Activated T-helper 1 cell treated with anti-CD3 and anti-CD28 coated beads, Interleukin-12 subunit alpha, Interleukin-12 subunit beta, Interleukin-2, Interleukin-4 antibody, amounts not matched to agents 30 ng/mL and 10 ng/mL and 1 ng/mL, durations not matched to agents 14 hours and 24 hours and 36 hours (primary cell): ENCODE measurements at regions of chr13 and their contacts with region 1.

Region 1: GRCh38 chr13:23375001-23375971 is 58.2 kb downstream of the SACS start:
- DNase-seq: peak; percentile 92
- H3K4me3 Mint-ChIP-seq: peak overlapping the region; percentile 78
- H3K27ac Mint-ChIP-seq: peak overlapping the region; percentile 36
- H3K4me1 Mint-ChIP-seq: peaks cover 74% of the 10 kb centered on the region
- H3K27me3 Mint-ChIP-seq: peaks cover 4% of the 10 kb centered on the region

Region 2: GRCh38 chr13:21670883-21671619 is 1704.2 kb before region 1 on chr13 and contains the start of gene FGF9:
- intact Hi-C with region 1: loop called (anchors 2 kb)
- DNase-seq: peak; percentile 77
- H3K4me3 Mint-ChIP-seq: peak within 1 kb of the TSS; percentile 82
- H3K27ac Mint-ChIP-seq: peak within 1 kb of the TSS; percentile 59
- H3K4me1 Mint-ChIP-seq: peaks cover 42% of the 10 kb centered on the region
- H3K27me3 Mint-ChIP-seq: peaks cover 62% of the 10 kb centered on the region
- total RNA-seq, gene FGF9: 0.23 and 0.47 TPM in 2 replicates

Region 3: GRCh38 chr13:23466144-23467002 is 91.1 kb after region 1 on chr13:
- intact Hi-C with region 1: loop called (anchors 2 kb)
- DNase-seq: peak; percentile 40
- H3K4me3 Mint-ChIP-seq: peak overlapping the region; percentile 68
- H3K27ac Mint-ChIP-seq: peak overlapping the region; percentile 21
- H3K4me1 Mint-ChIP-seq: peaks cover 5% of the 10 kb centered on the region
- H3K27me3 Mint-ChIP-seq: peaks cover 22% of the 10 kb centered on the region

Region 4: GRCh38 chr13:23707674-23708073 is 332.4 kb after region 1 on chr13:
- intact Hi-C with region 1: no loop called
- DNase-seq: no peak
- H3K4me3 Mint-ChIP-seq: no peak overlapping the region
- H3K27ac Mint-ChIP-seq: no peak overlapping the region
- H3K4me1 Mint-ChIP-seq: no peaks in the 10 kb centered on the region
- H3K27me3 Mint-ChIP-seq: peaks cover 7% of the 10 kb centered on the region

Region 5: GRCh38 chr13:23752111-23753001 is 377.1 kb after region 1 on chr13:
- intact Hi-C with region 1: loop called (anchors 5 kb)
- DNase-seq: no peak
- H3K4me3 Mint-ChIP-seq: no peak overlapping the region
- H3K27ac Mint-ChIP-seq: no peak overlapping the region
- H3K4me1 Mint-ChIP-seq: peaks cover 29% of the 10 kb centered on the region
- H3K27me3 Mint-ChIP-seq: peaks cover 4% of the 10 kb centered on the region

Region 6: DNA sequence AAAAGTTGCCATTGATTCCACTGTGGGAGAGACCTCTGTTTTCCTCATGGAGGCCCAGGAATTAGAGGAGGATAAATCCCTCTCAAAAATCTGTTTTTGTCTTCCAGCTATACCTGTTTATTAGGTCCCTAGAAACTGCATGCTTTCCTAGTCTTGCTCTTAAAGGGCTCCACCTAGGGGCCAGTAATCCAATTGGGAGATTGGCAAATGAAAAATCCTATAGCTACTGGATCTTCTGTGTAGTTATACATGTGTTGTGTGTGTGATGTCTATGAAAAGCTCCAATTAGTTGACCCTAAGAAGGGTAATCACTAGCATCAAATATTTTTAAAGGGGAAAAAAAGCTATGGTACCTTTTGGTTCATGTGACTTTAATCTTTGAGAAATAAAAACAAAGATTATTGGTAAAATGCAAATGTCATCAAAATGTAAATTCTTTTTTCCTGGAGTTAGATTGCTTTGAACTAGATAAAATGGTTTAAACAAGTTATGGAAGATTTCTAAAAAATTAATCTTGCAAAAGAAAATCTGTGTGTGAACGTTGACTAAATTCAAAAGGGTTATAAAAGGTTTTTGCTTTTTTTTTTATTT is 585.4 kb after region 1 on chr13:
- intact Hi-C with region 1: loop called (anchors 10 kb)
- DNase-seq: no peak
- H3K4me3 Mint-ChIP-seq: no peak overlapping the region
- H3K27ac Mint-ChIP-seq: no peak overlapping the region
- H3K4me1 Mint-ChIP-seq: peaks cover 59% of the 10 kb centered on the region
- H3K27me3 Mint-ChIP-seq: peaks cover 7% of the 10 kb centered on the region

Region 7: DNA sequence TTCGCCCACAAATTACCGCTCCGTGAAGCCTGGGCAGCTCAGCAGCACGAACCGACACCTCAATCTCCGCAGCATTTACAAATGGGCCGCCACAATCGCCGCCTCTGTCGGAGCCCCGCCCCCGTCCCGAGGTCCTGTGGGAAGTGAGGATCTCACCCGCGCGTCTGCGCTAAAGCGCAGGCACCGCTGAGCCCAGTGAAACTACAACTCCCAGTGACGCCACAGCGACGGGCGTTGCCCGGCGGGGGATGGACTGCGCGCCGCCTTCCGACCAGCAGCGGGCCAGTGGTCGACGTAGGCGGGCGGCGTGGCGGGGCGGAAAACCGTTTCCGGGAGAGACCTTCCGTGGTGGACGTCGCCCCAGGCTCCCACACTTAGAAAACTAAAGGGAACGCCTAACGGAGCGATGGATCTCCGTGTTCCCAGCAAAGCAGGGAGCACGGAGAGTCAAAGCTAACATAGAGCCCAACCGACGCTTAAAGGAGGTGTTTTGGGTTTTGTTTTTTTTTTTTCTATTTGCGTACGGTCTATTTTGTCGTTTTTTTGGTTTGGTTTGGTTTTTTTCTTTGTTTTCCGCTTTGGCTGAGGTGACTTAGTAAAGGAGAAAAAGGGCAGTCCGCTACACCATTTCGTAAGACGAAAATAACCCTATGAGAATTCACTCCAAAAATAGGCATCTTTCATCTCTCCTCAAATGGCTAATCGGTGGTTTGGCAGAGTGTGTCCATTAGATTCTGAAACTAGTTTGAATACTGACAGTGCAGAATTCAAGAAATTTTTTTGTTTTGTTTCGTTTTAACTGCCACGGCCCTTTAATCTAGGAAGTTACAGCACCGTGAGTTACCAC is 1547.7 kb after region 1 on chr13:
- intact Hi-C with region 1: loop called (anchors 2 kb)
- DNase-seq: peak; percentile 95
- H3K4me3 Mint-ChIP-seq: peak overlapping the region; percentile 95
- H3K27ac Mint-ChIP-seq: peak overlapping the region; percentile 92
- H3K4me1 Mint-ChIP-seq: peaks cover 14% of the 10 kb centered on the region
- H3K27me3 Mint-ChIP-seq: peaks cover 2% of the 10 kb centered on the region